CD4-positive, alpha-beta T cell (primary cell): ENCODE measurements at regions of chr7 and their contacts with region 1.

Region 1: DNA sequence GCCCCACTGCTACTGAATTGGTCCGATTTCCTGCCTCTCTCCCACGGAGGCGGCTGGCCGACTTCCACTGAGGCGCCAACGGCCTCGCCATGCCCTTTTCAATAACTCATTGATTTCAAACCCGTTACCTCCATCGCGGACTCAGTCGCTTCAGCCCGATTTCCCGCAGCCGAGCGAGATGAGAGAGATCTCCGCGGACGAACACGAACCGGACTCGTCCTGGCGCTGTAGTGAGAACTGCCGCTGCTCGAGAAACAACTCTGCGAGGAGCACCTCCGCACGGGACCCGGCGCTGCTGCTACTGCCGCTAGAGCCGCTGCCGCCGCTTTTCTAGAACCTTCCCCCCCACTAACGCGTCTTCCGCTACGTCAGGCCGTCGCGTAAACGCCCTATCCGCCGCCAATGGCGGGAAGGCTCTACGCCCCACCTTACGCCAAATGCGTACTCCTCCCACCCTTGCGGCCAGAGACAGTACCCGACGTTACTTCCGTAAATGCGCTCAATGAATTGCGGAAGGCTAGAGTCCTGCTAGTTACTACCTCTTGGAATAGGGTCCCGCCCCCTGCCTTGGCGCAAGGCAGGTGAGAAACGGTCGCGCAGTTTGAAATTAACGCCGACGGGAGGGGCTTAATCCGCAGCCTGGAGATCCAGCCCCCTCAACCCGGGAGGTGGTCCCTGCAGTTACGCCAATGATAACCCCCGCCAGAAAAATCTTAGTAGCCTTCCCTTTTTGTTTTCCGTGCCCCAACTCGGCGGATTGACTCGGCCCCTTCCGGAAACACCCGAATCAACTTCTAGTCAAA is at the start of gene HNRNPA2B1:
- DNase-seq: peak; percentile 95 to 99 (median 98)
- ATAC-seq: peak; percentile 72
- H3K4me3 ChIP-seq: peak within 1 kb of the TSS; percentile 74
- H3K4me3 Mint-ChIP-seq: peak within 1 kb of the TSS; percentile 92
- H3K27ac ChIP-seq: peak within 1 kb of the TSS; percentile 98
- H3K27ac Mint-ChIP-seq: peak within 1 kb of the TSS; percentile 99
- H3K4me1 ChIP-seq: peaks cover 22% of the 10 kb centered on the region
- H3K4me1 Mint-ChIP-seq: peaks cover 55% of the 10 kb centered on the region
- H3K27me3 ChIP-seq: no peaks in the 10 kb centered on the region
- H3K27me3 Mint-ChIP-seq: peaks cover 7% of the 10 kb centered on the region
- CTCF ChIP-seq: no peak
- total RNA-seq, gene HNRNPA2B1: 282 to 299 TPM

Region 2: GRCh38 chr7:24572997-24573625 is 1627.5 kb before region 1 on chr7 and contains the start of gene PALS2:
- CTCF ChIA-PET with region 1: no interaction called
- POLR2A ChIA-PET with region 1: no interaction called
- intact Hi-C with region 1: loop called in 1 of 2 experiments (anchors 5 kb)
- DNase-seq: peak; percentile 61 to 92 (median 80)
- ATAC-seq: peak; percentile 76
- H3K4me3 ChIP-seq: peak within 1 kb of the TSS; percentile 84
- H3K4me3 Mint-ChIP-seq: peak within 1 kb of the TSS; percentile 97
- H3K27ac ChIP-seq: peak within 1 kb of the TSS; percentile 35 to 49
- H3K27ac Mint-ChIP-seq: peak within 1 kb of the TSS; percentile 91
- H3K4me1 ChIP-seq: peaks cover 19% of the 10 kb centered on the region
- H3K4me1 Mint-ChIP-seq: peaks cover 43% of the 10 kb centered on the region
- H3K27me3 ChIP-seq: no peaks in the 10 kb centered on the region
- H3K27me3 Mint-ChIP-seq: no peaks in the 10 kb centered on the region
- CTCF ChIP-seq: no peak
- total RNA-seq, gene PALS2: 35.0 to 53.2 TPM

Region 3: DNA sequence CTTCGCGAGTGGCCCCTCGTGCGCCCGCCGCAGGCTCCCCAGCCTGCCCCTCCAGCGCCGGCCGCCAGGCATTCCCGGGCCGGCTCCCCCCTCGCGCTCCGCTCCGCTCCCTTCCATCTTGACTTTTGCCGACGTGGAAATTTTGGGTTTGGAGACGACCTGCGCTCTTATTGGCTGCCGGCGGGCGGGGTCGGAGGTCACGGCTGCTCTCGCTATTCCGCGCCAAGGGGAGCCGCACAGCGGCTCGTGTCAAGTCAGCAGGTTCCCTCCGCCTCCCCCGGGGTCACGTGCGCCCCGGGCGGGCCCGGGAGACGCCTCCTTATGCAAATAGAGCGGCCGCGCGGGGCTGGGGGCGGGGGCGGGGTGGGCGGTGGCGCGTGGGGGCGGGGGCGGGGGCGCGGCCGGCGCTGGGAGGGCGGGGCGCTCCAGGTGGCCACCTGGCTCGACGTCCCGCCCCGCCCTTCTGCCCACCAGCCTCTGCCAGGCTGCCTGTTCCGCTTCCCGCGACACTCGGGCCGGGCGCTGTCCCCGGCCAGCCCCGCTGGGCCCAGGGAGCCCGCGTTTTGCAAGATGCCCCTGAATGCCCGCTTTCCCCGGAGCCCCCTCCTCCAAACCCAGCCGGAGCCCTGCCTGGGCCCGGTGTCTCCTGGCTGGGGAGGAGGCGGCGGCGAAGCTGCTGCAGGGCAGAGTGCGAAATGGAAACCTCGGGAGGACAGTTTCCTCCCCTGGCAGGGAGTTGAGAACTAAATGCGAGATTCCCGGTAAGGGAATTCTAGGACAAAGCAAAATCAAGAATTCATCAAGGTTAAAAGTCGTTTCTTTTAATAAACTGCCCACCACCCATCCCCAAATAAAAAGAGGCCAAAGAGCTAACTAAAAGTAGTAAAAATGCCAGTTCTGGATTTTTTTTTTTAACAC is 249.4 kb before region 1 on chr7:
- CTCF ChIA-PET with region 1: no interaction called
- POLR2A ChIA-PET with region 1: no interaction called
- intact Hi-C with region 1: loop called in 1 of 2 experiments (anchors 2 kb)
- DNase-seq: peak; percentile 77 to 96 (median 88)
- ATAC-seq: peak; percentile 98
- H3K4me3 ChIP-seq: peak overlapping the region; percentile 64
- H3K4me3 Mint-ChIP-seq: peak overlapping the region; percentile 96
- H3K27ac ChIP-seq: no peak overlapping the region
- H3K27ac Mint-ChIP-seq: peak overlapping the region; percentile 69
- H3K4me1 ChIP-seq: peaks cover 19% of the 10 kb centered on the region
- H3K4me1 Mint-ChIP-seq: peaks cover 30% of the 10 kb centered on the region
- H3K27me3 ChIP-seq: no peaks in the 10 kb centered on the region
- H3K27me3 Mint-ChIP-seq: no peaks in the 10 kb centered on the region
- CTCF ChIP-seq: no peak

Region 4: GRCh38 chr7:26052721-26053120 is 147.9 kb before region 1 on chr7:
- CTCF ChIA-PET with region 1: no interaction called
- POLR2A ChIA-PET with region 1: no interaction called
- intact Hi-C with region 1: no loop called
- DNase-seq: no peak
- ATAC-seq: no peak
- H3K4me3 ChIP-seq: no peak overlapping the region
- H3K4me3 Mint-ChIP-seq: no peak overlapping the region
- H3K27ac ChIP-seq: no peak overlapping the region
- H3K27ac Mint-ChIP-seq: no peak overlapping the region
- H3K4me1 ChIP-seq: no peaks in the 10 kb centered on the region
- H3K4me1 Mint-ChIP-seq: no peaks in the 10 kb centered on the region
- H3K27me3 ChIP-seq: peaks cover 15 to 18% of the 10 kb centered on the region in 2 experiments
- H3K27me3 Mint-ChIP-seq: peaks cover 42% of the 10 kb centered on the region
- CTCF ChIP-seq: no peak

Region 5: DNA sequence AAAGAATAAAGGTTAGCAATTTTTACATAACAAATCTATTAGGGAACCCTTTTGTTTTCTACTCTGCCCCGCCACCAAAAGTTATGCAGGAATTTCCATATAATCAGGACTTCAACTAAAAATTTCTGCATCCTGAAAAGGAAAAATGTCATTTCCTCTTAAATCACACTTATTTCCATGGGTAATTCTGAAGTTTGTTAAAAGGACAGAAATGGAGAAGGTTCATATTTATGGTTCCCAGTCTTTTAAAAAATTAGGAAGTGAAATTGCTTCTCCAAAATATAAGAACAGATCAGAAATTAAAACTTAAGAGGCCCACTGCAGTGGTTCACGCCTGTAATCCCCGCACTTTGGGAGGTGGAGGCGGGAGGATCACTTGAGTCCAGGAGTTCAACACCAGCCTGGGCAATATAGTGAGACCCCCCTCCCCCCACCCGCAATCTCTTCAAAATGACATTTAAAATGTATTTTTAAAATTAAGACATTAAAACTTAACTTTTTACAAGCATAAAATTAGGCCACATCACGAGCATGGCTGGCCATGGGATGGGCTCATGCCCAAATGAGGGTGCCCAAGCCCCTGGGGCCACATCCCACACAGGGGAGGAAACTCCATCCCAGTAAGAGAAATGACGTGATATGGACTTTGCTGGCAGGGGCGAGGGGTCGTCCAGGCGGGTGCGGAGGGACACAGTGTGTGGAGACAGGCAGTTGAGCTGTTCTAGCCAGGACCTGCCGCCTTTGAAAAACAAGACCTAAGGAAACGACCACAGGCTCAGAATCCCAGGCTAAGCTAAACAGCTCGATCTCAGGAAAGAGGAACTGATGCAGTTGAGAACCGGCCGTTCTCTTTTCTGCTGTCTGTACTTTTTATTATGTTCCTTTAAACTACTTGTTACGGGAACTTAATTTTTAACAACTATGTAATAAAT is 100.0 kb before region 1 on chr7:
- CTCF ChIA-PET with region 1: no interaction called
- POLR2A ChIA-PET with region 1: interaction called, 64 read pairs
- intact Hi-C with region 1: loop called in 1 of 2 experiments (anchors 2 kb)
- DNase-seq: peak in 1 of 14 experiments; percentile 43
- ATAC-seq: no peak
- H3K4me3 ChIP-seq: peak overlapping the region; percentile 35
- H3K4me3 Mint-ChIP-seq: peak overlapping the region; percentile 81
- H3K27ac ChIP-seq: no peak overlapping the region
- H3K27ac Mint-ChIP-seq: peak overlapping the region; percentile 89
- H3K4me1 ChIP-seq: peaks cover 37% of the 10 kb centered on the region
- H3K4me1 Mint-ChIP-seq: peaks cover 61% of the 10 kb centered on the region
- H3K27me3 ChIP-seq: no peaks in the 10 kb centered on the region
- H3K27me3 Mint-ChIP-seq: no peaks in the 10 kb centered on the region
- CTCF ChIP-seq: no peak

Region 6: GRCh38 chr7:26291699-26292538 is 91.3 kb after region 1 on chr7 and contains the start of gene SNX10:
- CTCF ChIA-PET with region 1: interaction called, 3 read pairs
- POLR2A ChIA-PET with region 1: interaction called, 50 read pairs
- intact Hi-C with region 1: loop called (anchors 2 kb)
- DNase-seq: peak; percentile 40 to 91 (median 64)
- ATAC-seq: peak; percentile 82
- H3K4me3 ChIP-seq: peak within 1 kb of the TSS; percentile 89
- H3K4me3 Mint-ChIP-seq: peak within 1 kb of the TSS; percentile 95
- H3K27ac ChIP-seq: peak within 1 kb of the TSS; percentile 46 to 53
- H3K27ac Mint-ChIP-seq: peak within 1 kb of the TSS; percentile 72
- H3K4me1 ChIP-seq: peaks cover 38% of the 10 kb centered on the region
- H3K4me1 Mint-ChIP-seq: peaks cover 37% of the 10 kb centered on the region
- H3K27me3 ChIP-seq: no peaks in the 10 kb centered on the region
- H3K27me3 Mint-ChIP-seq: no peaks in the 10 kb centered on the region
- CTCF ChIP-seq: no peak
- total RNA-seq, gene SNX10: 4.6 to 5.8 TPM

Region 7: DNA sequence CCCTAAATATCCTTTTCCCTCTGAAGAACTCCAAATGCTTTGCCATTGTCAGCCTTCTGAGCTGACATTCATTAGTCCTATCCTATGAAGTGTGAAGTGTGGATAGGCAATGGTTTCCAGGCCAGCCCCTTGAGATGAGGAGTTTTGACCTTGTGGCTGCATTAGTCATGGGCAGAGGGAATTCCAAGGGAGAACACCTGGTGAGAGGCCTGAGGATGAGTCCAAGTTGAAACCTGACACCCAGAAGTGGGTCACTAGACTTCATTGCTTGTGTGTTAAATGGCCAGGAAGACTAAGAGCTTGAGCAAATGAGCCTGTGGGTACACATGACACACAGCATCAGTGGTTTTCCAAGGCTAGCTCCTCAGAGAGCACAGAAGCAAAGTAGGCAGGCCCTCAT is 403.0 kb after region 1 on chr7:
- CTCF ChIA-PET with region 1: no interaction called
- POLR2A ChIA-PET with region 1: no interaction called
- intact Hi-C with region 1: no loop called
- DNase-seq: no peak
- ATAC-seq: no peak
- H3K4me3 ChIP-seq: no peak overlapping the region
- H3K4me3 Mint-ChIP-seq: no peak overlapping the region
- H3K27ac ChIP-seq: no peak overlapping the region
- H3K27ac Mint-ChIP-seq: no peak overlapping the region
- H3K4me1 ChIP-seq: no peaks in the 10 kb centered on the region
- H3K4me1 Mint-ChIP-seq: no peaks in the 10 kb centered on the region
- H3K27me3 ChIP-seq: no peaks in the 10 kb centered on the region
- H3K27me3 Mint-ChIP-seq: peaks cover 12% of the 10 kb centered on the region
- CTCF ChIP-seq: no peak

Region 8: DNA sequence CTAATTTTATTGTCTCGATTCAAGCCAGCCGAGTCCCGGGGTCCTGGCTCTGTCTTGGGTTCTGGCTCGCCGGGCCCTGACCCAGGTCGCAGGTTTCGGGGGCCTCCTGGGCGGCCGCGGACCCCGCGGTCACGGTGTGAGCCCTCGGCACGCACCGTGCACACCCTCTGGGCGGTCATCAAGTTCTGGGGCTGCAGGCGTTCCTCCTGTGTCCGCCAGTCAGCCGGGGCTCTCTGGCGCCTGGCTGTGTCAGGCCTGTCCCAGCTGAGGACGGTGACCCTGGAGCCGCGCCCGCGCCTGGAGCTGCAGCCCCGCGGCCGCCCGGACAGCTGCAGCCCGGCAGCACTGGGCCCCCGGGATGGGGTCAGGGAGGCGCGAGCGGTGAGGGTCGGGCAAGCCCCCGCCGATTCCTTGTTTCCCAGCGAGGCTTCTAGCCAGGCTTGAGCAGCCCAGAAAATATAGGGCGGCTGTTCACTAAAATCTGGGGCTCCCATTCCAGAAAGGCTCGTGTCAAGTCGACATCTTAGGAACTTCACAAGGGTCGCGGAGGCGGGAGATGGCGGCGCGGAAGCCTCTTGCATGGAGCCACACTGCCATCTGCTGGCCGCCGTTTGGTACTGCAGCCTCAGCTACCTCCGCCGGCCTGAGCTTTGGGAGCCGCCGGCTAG is 960.0 kb after region 1 on chr7:
- CTCF ChIA-PET with region 1: no interaction called
- POLR2A ChIA-PET with region 1: no interaction called
- intact Hi-C with region 1: loop called (anchors 5 to 10 kb)
- DNase-seq: peak; percentile 72 to 92 (median 80)
- ATAC-seq: peak; percentile 81
- H3K4me3 ChIP-seq: peak overlapping the region; percentile 60
- H3K4me3 Mint-ChIP-seq: peak overlapping the region; percentile 87
- H3K27ac ChIP-seq: no peak overlapping the region
- H3K27ac Mint-ChIP-seq: peak overlapping the region; percentile 42
- H3K4me1 ChIP-seq: peaks cover 57% of the 10 kb centered on the region
- H3K4me1 Mint-ChIP-seq: peaks cover 46% of the 10 kb centered on the region
- H3K27me3 ChIP-seq: peaks cover 82 to 94% of the 10 kb centered on the region in 2 experiments
- H3K27me3 Mint-ChIP-seq: peaks cover 93% of the 10 kb centered on the region
- CTCF ChIP-seq: peak; percentile 100